CD8-positive, alpha-beta memory T cell (primary cell): ENCODE measurements at regions of chr6 and their contacts with region 1.

Region 1: GRCh38 chr6:33454009-33454946 is at the start of gene ZBTB9:
- DNase-seq: peak; percentile 92 to 97 (median 92)
- H3K4me3 ChIP-seq: peak within 1 kb of the TSS; percentile 84
- H3K4me3 Mint-ChIP-seq: peak within 1 kb of the TSS; percentile 90 to 99 (median 97)
- H3K27ac ChIP-seq: peak within 1 kb of the TSS; percentile 84
- H3K27ac Mint-ChIP-seq: peak within 1 kb of the TSS; percentile 89 to 98 (median 94)
- H3K4me1 ChIP-seq: peaks cover 21% of the 10 kb centered on the region
- H3K4me1 Mint-ChIP-seq: peaks cover 36 to 50% (median 43%) of the 10 kb centered on the region in 3 donors
- H3K27me3 ChIP-seq: no peaks in the 10 kb centered on the region
- H3K27me3 Mint-ChIP-seq: no peaks in the 10 kb centered on the region
- total RNA-seq, gene ZBTB9: 16.4 to 16.5 TPM

Region 2: GRCh38 chr6:31619805-31620585 is 1834.3 kb before region 1 on chr6:
- CTCF ChIA-PET with region 1: no interaction called
- POLR2A ChIA-PET with region 1: interaction called, 10 read pairs
- DNase-seq: peak; percentile 95 to 98 (median 96)
- H3K4me3 ChIP-seq: peak overlapping the region; percentile 92
- H3K4me3 Mint-ChIP-seq: peak overlapping the region; percentile 86 to 95 (median 91)
- H3K27ac ChIP-seq: peak overlapping the region; percentile 99
- H3K27ac Mint-ChIP-seq: peak overlapping the region; percentile 94 to 100 (median 98)
- H3K4me1 ChIP-seq: peaks cover 37% of the 10 kb centered on the region
- H3K4me1 Mint-ChIP-seq: peaks cover 37 to 56% (median 47%) of the 10 kb centered on the region in 3 donors
- H3K27me3 ChIP-seq: no peaks in the 10 kb centered on the region
- H3K27me3 Mint-ChIP-seq: peaks cover 0 to 3% of the 10 kb centered on the region in 2 donors

Region 3: DNA sequence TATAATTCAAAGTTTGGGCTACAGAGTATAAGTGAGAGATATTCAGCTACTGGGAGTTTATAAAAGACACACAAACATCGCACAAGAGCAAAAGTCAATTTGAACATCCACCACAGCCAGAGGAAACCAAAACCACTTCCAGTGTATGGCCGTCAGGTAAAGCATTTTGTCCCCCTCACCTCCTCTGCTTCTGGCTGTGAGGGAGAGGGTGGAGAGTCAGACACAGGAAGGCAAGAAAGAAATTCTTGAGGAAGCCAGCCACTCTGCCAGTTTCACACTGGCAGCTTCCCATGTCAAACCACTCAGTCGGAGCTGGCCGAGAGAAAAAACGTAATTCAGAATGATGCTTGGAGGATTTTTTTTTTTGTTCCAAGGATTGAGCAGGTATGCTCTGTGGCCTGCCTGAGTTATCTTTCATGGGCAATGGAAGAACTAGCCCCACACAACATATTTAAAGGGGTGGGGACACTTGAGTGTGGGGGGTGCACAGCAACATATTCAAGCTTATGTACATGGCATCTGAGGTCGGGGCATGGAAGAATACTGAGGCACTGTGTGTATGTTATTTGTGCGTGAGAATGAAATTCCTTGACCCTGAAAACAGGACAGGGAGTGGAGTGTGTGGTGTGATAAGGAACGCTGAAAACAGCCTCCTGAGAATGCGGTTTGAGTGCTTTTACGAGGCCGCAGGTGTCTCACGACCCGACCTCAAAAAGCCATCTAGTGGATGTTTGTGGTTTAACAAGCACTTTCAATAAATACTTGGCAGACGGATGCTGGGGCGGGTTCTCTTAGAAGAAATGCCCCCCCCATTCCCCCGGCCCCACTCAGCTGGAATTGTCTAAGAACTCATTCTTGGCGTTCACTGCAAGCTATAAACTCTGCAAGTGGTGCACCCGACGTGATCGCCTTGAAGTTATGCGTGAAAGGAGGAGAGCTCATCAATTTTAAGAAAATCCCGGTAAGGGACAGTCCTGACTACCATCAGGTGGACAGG is 109.3 kb before region 1 on chr6:
- CTCF ChIA-PET with region 1: no interaction called
- POLR2A ChIA-PET with region 1: no interaction called
- DNase-seq: peak; percentile 58 to 87 (median 84)
- H3K4me3 ChIP-seq: peak overlapping the region; percentile 56
- H3K4me3 Mint-ChIP-seq: peak overlapping the region; percentile 69 to 92 (median 85)
- H3K27ac ChIP-seq: peak overlapping the region; percentile 77
- H3K27ac Mint-ChIP-seq: peak overlapping the region; percentile 85 to 99 (median 97)
- H3K4me1 ChIP-seq: peaks cover 35% of the 10 kb centered on the region
- H3K4me1 Mint-ChIP-seq: peaks cover 39 to 41% (median 40%) of the 10 kb centered on the region in 3 donors
- H3K27me3 ChIP-seq: no peaks in the 10 kb centered on the region
- H3K27me3 Mint-ChIP-seq: peaks cover 0 to 4% of the 10 kb centered on the region in 2 donors

Region 4: DNA sequence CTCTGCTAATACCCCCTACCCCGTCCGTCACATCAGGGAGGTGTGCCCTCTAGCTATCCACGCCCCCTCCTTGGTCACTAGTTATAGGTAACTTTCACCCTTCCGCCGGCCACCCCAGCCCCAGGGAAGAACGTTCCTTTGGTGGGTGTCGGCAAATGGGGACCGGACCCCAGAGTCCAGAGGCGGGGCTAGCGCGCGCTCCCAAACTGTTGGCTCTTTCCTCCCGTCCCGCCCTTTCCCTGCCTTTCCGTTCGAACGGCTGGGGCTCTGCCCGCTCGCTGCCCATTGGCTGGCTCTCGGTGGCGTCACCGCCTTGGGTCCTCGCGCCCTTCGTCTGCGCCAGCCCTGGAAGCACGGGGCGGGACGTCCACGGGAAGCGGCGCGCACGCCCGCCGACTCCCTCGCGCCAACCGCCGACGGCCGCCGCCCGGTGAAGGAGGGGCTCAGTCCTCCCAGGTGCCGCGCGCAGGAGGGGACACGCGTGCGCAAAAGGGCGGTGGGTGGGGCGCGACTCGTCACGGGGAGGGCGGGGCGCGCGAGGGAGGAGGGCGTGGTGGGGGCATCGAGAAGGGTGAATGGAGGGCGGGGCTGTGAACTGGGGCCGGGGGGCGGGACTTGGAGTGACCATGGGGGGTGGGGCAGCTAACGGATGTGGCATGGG is 44.1 kb before region 1 on chr6:
- CTCF ChIA-PET with region 1: no interaction called
- POLR2A ChIA-PET with region 1: interaction called, 12 read pairs
- DNase-seq: peak; percentile 95 to 99 (median 98)
- H3K4me3 ChIP-seq: peak overlapping the region; percentile 87
- H3K4me3 Mint-ChIP-seq: peak overlapping the region; percentile 85 to 94 (median 91)
- H3K27ac ChIP-seq: peak overlapping the region; percentile 95
- H3K27ac Mint-ChIP-seq: peak overlapping the region; percentile 94 to 100 (median 98)
- H3K4me1 ChIP-seq: peaks cover 42% of the 10 kb centered on the region
- H3K4me1 Mint-ChIP-seq: peaks cover 47 to 55% (median 52%) of the 10 kb centered on the region in 3 donors
- H3K27me3 ChIP-seq: no peaks in the 10 kb centered on the region
- H3K27me3 Mint-ChIP-seq: no peaks in the 10 kb centered on the region

Region 5: DNA sequence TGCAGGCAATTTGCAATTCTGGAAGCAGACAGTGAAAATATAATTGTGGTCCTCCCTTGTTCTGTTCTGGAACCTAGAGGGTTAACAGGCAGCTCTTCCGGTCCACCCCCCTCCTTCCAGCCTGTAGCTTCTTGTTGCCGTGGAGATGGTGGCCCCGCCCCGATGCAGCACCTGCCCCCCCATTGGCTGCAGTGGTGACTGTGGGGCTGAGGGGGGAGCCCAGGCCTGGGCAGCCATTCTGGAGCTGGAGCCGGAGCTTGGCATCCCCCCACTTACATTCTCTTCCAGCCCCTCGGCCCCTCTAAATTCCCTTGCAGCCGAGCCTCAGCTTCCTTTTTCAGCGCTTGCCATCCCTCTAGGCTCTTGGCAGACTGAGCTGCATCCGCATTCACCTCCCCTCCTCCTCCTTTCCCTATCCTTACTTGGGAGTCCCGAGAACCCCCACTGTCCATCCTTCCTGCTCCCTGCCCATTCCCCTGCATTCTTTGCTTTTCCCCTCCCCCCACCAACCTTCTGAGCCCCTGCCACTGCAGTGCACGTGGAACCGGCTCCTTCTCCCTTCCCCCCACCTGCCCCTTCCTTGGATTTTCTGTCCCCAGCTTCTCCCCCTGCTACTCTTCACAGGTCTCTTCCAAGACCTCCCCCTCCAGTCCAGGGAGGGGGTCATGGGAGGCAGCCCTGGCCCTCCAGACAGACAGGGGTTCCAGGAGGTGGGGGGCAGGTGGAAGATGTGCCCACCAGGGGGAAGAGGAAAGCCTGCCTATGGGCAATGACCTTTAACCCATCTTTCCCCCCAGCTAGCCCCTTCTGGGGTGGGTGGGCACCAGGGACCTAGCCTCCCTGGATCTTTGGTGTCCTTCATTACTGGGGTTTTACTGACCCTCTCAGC is 23.0 kb before region 1 on chr6:
- CTCF ChIA-PET with region 1: interaction called, 4 read pairs
- POLR2A ChIA-PET with region 1: interaction called, 14 read pairs
- DNase-seq: peak; percentile 72 to 93 (median 83)
- H3K4me3 ChIP-seq: peak overlapping the region; percentile 34
- H3K4me3 Mint-ChIP-seq: peak overlapping the region; percentile 88 to 94 (median 89)
- H3K27ac ChIP-seq: peak overlapping the region; percentile 36
- H3K27ac Mint-ChIP-seq: peak overlapping the region; percentile 82 to 98 (median 96)
- H3K4me1 ChIP-seq: peaks cover 56% of the 10 kb centered on the region
- H3K4me1 Mint-ChIP-seq: peaks cover 63 to 71% (median 66%) of the 10 kb centered on the region in 3 donors
- H3K27me3 ChIP-seq: no peaks in the 10 kb centered on the region
- H3K27me3 Mint-ChIP-seq: peaks cover 0 to 11% of the 10 kb centered on the region in 2 donors